GM18951 (cell line): ENCODE measurements at regions of chr19 and their contacts with region 1.

Region 1: GRCh38 chr19:19488875-19489690 is 26.3 kb downstream of the TSSK6 start:
- POLR2A ChIP-seq: peak; percentile 30

Region 2: DNA sequence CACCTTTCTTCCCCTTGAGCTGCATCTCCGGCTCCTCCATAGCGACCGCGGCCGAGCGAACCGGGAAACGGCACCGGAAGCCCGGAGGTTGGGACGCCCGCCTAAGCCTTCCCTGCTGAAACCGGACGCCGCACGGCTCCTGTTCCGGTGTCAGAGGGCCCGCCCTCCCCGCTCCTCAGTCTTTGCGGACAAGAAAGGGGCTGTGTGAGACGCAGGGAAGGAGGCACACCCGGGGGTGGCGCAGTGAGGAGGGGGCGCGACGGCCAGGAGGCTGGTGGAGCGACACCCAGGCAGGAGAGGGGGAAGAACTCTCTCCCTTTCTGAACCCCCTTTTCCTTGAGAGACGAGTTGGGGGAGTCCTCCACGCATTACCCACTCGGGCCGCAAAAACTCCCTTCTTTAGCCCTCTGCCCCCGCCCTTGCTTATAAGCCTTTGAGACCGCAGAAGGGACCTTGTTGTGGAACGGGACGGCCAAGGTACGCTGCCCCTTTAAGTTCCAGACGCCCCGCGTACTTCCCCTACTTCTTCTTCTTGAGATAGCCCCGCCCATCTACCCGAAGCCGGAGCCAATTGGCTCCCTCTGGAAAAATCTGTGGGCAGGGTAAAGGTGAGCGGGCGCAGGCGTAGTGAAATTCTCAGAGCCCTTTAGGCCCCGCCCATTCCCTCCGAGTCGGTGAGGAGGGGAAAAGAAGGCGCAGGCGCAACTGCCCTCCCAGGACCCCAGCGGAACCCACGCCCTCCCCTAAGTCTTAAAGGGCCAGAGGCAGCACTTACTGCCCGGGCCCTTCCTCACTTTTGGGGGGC is 296.8 kb before region 1 on chr19 and contains the starts of genes BORCS8 and RFXANK:
- in situ Hi-C with region 1: loop called (anchors 25 kb)
- POLR2A ChIP-seq: peak; percentile 82

Region 3: DNA sequence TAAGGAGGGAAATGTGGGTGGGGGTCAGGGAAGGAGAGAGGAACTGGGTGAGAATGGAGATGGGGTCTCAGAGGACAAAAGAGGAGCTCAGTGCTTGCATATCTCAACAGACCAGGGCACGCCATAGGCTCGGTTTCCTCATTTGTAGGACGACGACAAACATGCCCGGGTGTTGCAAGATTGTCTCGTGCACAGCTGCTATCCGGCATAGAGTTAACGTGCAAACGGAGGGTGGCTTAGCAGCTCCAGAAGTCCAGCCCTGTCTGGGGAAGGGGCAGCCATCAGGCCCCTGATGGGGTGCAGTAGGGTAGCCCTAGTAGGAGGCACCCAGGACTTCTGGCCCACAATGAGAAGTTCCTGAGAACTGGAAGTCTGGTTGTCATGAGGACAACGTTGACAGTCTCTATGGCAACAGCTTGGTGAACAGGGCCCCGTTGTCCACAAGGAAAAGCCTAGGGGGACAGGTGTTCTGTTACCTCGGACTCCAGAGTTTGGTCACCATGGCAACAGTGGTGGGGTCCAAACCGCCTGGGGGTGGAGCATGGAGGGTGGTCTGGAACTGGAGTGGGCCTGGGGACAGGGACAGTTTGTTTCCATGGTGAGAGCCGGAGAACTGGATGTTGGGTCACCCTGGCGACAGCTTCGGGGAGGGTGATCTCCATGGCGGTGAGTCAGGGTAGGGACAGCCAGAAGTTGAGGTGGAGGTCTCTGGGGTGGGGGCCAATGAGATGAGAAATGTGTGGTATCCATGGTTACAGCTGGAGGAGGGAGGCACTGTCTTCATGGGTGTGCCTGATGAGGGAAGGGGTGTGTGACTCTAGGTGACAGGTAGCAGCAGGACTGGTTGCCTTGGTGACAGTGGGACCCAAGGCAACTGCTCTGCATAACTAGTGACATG is 232.8 kb before region 1 on chr19:
- in situ Hi-C with region 1: no loop called
- POLR2A ChIP-seq: no peak

Region 4: DNA sequence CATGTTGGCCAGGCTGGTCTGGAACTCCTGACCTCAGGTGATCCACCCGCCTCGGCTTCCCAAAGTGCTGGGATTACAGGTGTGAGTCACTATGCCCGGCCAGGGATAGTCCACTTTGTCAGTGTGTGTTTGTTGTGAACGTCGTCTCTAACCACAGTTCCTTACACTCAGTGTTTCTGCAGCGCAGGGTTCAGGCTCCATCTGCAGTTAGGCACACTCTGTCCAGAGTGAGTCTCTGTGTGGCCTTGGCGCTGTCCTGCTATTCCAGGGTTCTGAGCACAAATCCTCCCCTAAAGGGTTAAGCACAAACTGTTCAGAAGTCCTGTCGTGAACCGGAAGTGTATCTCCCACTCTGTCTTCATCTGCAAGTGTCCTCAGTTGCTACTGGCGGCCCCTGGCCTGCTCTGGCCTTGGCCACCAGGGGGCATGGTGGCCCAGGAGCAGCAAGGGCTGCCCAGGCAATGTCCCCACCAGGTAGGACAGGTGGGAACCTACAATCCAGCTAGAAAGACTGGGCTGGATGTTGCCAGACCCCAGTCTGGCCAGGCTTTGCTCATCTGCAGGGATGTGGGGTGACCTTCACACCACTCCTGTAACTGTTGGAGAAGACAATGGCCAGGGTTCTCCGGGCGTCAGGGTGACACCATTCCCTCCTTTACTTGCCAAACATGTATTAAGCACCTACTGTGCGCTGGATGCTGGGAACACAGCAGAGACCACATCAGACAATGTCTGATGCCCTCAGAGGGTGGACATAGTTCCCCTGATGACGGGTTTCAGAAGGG is 122.3 kb before region 1 on chr19:
- in situ Hi-C with region 1: loop called (anchors 5 kb)
- POLR2A ChIP-seq: no peak

Region 5: DNA sequence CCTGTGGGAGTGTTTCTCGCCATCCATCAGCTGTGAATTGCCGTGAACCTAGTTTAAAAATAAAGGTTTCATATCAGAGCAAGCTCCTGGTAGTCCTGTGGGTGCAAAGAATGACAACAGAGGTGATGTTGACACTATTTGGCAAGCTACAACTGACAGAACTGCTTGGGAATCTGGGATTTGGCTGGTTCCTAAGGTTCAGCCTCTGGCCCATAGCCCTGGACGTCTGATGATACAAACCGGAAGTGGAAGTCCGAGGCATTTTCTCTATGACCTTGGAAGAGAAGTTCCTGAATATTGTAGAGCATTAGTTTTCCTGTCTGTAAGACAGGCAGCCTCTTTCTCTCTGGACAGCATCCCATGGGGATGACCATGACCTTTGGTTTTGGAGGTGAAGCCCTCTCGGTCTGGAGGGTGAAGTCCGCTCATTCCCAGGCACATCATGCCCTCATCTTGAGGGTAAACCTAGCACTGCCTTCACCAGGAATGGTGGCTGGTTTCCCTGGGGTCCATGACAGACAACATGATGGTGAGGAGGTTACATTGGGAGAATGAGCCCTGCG is 54.5 kb before region 1 on chr19:
- in situ Hi-C with region 1: no loop called
- POLR2A ChIP-seq: no peak